Right cardiac atrium (tissue), 5 donors: ENCODE measurements at regions of chr17 and their contacts with region 1.

Region 1: DNA sequence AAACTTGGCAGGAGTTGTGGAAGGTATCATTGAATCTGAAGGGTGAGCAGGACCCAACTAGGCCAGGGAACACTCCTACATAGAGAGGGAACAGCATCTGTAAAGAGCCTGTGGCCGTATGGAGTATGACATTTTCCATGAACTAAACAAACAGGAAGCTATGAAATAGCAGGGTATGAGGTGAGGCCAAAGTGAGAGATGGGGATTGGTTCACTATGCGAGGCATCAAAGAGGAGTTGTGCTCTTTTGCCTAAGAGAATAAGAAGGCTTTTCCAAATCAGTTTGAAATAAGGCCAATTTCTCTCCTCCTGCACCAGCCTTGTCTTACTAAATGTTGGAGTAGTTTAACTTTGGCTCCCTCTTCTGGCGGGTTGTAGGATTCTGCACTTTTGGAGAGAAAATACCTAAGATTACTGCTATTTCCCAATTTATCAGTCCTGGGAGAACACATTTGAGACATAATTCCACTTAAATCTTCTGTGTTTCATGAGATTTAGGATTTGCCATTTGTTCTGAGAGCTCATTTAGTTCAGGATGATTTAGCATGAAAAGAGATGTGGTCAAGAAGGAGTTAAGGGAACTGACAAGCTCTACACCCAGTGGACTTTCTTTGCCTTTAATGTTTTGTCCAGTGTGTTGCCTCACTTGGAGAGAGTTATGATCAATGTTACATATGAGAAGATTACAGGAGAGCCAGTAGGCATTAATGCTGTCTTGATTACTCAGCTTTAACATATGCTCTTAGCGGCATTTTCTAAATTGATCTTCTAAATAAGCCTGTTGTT is 55.4 kb downstream of the TNRC6C start:
- DNase-seq: no peak
- ATAC-seq: peak; percentile 69 to 70
- H3K4me3 ChIP-seq: no peak overlapping the region
- H3K27ac ChIP-seq: no peak overlapping the region
- H3K4me1 ChIP-seq: peaks cover 3% of the 10 kb centered on the region
- H3K27me3 ChIP-seq: no peaks in the 10 kb centered on the region

Region 2: GRCh38 chr17:77690271-77691161 is 323.4 kb before region 1 on chr17:
- intact Hi-C with region 1: no loop called
- DNase-seq: no peak
- ATAC-seq: no peak
- H3K4me3 ChIP-seq: peak overlapping the region; percentile 21
- H3K27ac ChIP-seq: no peak overlapping the region
- H3K4me1 ChIP-seq: no peaks in the 10 kb centered on the region
- H3K27me3 ChIP-seq: no peaks in the 10 kb centered on the region

Region 3: DNA sequence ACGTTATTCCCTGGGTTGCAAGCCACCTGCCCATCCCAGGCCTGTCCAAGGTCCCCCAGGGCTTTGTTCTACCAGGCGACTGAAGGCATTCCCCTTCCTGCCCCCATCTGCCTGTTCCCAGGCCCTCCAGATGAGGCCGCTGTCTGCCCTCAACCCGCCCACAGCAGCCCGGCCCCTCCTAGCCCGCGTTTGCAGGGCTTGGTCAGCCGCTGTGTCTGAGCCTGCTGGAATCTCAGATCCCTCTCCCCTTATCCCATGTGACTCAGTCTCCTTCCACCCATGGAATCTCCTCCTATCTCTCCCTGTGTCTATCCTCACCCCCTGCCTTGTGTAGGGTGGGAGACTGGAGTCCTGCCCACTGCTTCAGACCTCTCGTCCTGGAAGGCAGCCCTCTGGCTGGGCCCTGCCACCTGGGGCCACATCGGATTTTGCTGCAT is 241.4 kb before region 1 on chr17:
- intact Hi-C with region 1: loop called in 2 of 4 experiments (anchors 5 to 10 kb)
- DNase-seq: peak; percentile 61 to 90 (median 88)
- ATAC-seq: peak; percentile 85 to 91
- H3K4me3 ChIP-seq: no peak overlapping the region
- H3K27ac ChIP-seq: no peak overlapping the region
- H3K4me1 ChIP-seq: no peaks in the 10 kb centered on the region
- H3K27me3 ChIP-seq: no peaks in the 10 kb centered on the region

Region 4: GRCh38 chr17:77779711-77780539 is 233.9 kb before region 1 on chr17:
- intact Hi-C with region 1: loop called in 2 of 4 experiments (anchors 10 kb)
- DNase-seq: peak; percentile 52 to 85 (median 82)
- ATAC-seq: peak; percentile 67 to 69
- H3K4me3 ChIP-seq: no peak overlapping the region
- H3K27ac ChIP-seq: peak overlapping the region; percentile 65
- H3K4me1 ChIP-seq: peaks cover 5% of the 10 kb centered on the region
- H3K27me3 ChIP-seq: no peaks in the 10 kb centered on the region